Caco-2 (cell line): ENCODE measurements at regions of chr2 and their contacts with region 1.

Region 1: DNA sequence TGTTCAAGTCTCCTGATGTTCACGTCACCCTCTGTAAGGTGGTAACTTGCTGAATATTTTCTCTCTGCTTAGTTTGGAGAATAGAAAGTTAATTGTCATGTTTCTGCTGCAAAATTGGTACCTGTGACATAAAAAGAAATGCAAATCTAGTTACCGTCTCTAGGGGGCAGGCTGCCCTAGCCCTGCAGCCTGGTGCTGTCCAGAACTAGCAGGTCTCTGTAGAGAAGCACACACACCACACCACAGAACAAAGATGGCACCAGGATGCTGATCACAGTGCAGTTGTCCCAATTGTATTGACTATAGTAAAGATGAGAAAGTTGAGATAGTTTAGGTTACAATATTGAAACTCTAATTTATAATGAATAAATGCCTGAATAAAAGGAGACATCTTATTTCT is 47.0 kb downstream of the SLC9A4 start:
- DNase-seq: peak; percentile 34 to 46
- H3K4me3 ChIP-seq: no peak overlapping the region
- H3K4me3 Mint-ChIP-seq: no peak overlapping the region
- H3K27ac Mint-ChIP-seq: no peak overlapping the region
- H3K4me1 ChIP-seq: peaks cover 57% of the 10 kb centered on the region
- H3K4me1 Mint-ChIP-seq: peaks cover 31% of the 10 kb centered on the region
- H3K27me3 ChIP-seq: no peaks in the 10 kb centered on the region
- H3K27me3 Mint-ChIP-seq: no peaks in the 10 kb centered on the region
- CTCF ChIP-seq: peak; percentile 54 to 55

Region 2: GRCh38 chr2:101697124-101698013 is 822.7 kb before region 1 on chr2 and contains the start of gene MAP4K4:
- CTCF ChIA-PET with region 1: no interaction called
- POLR2A ChIA-PET with region 1: no interaction called
- intact Hi-C with region 1: no loop called
- DNase-seq: peak; percentile 86 to 87
- H3K4me3 ChIP-seq: peak within 1 kb of the TSS; percentile 47
- H3K4me3 Mint-ChIP-seq: no peak within 1 kb of the TSS
- H3K27ac Mint-ChIP-seq: peak within 1 kb of the TSS; percentile 82
- H3K4me1 ChIP-seq: peaks cover 27% of the 10 kb centered on the region
- H3K4me1 Mint-ChIP-seq: peaks cover 17% of the 10 kb centered on the region
- H3K27me3 ChIP-seq: no peaks in the 10 kb centered on the region
- H3K27me3 Mint-ChIP-seq: no peaks in the 10 kb centered on the region
- CTCF ChIP-seq: peak in 1 of 2 experiments; percentile 25
- total RNA-seq, gene MAP4K4: 257 and 263 TPM in 2 replicates

Region 3: GRCh38 chr2:102473020-102473419 is 47.0 kb before region 1 on chr2 and contains the start of gene SLC9A4:
- CTCF ChIA-PET with region 1: no interaction called
- POLR2A ChIA-PET with region 1: no interaction called
- intact Hi-C with region 1: loop called (anchors 1 kb)
- DNase-seq: peak; percentile 63 to 72
- H3K4me3 ChIP-seq: no peak within 1 kb of the TSS
- H3K4me3 Mint-ChIP-seq: no peak within 1 kb of the TSS
- H3K27ac Mint-ChIP-seq: no peak within 1 kb of the TSS
- H3K4me1 ChIP-seq: peaks cover 17% of the 10 kb centered on the region
- H3K4me1 Mint-ChIP-seq: no peaks in the 10 kb centered on the region
- H3K27me3 ChIP-seq: no peaks in the 10 kb centered on the region
- H3K27me3 Mint-ChIP-seq: no peaks in the 10 kb centered on the region
- CTCF ChIP-seq: peak; percentile 89 to 91
- total RNA-seq, gene SLC9A4: 1.2 and 1.4 TPM in 2 replicates

Region 4: GRCh38 chr2:102703748-102704147 is 183.7 kb after region 1 on chr2:
- CTCF ChIA-PET with region 1: no interaction called
- POLR2A ChIA-PET with region 1: no interaction called
- intact Hi-C with region 1: loop called (anchors 2 kb)
- DNase-seq: peak in 1 of 2 experiments; percentile 39
- H3K4me3 ChIP-seq: no peak overlapping the region
- H3K4me3 Mint-ChIP-seq: no peak overlapping the region
- H3K27ac Mint-ChIP-seq: no peak overlapping the region
- H3K4me1 ChIP-seq: no peaks in the 10 kb centered on the region; the same call in 1 of the 2 replicates
- H3K4me1 Mint-ChIP-seq: peaks cover 17% of the 10 kb centered on the region
- H3K27me3 ChIP-seq: no peaks in the 10 kb centered on the region
- H3K27me3 Mint-ChIP-seq: no peaks in the 10 kb centered on the region
- CTCF ChIP-seq: peak in 1 of 2 experiments; percentile 60

Region 5: GRCh38 chr2:102806250-102806837 is 286.3 kb after region 1 on chr2:
- CTCF ChIA-PET with region 1: no interaction called
- POLR2A ChIA-PET with region 1: no interaction called
- intact Hi-C with region 1: loop called (anchors 1 kb)
- DNase-seq: peak; percentile 66 to 80
- H3K4me3 ChIP-seq: no peak overlapping the region
- H3K4me3 Mint-ChIP-seq: no peak overlapping the region
- H3K27ac Mint-ChIP-seq: no peak overlapping the region
- H3K4me1 ChIP-seq: peaks cover 10% of the 10 kb centered on the region
- H3K4me1 Mint-ChIP-seq: no peaks in the 10 kb centered on the region
- H3K27me3 ChIP-seq: no peaks in the 10 kb centered on the region
- H3K27me3 Mint-ChIP-seq: no peaks in the 10 kb centered on the region
- CTCF ChIP-seq: peak; percentile 85 to 90